Activated CD4-positive, alpha-beta T cell treated with anti-CD3 and anti-CD28 coated beads for 36 hours (primary cell): ENCODE measurements at regions of chr20 and their contacts with region 1.

Region 1: DNA sequence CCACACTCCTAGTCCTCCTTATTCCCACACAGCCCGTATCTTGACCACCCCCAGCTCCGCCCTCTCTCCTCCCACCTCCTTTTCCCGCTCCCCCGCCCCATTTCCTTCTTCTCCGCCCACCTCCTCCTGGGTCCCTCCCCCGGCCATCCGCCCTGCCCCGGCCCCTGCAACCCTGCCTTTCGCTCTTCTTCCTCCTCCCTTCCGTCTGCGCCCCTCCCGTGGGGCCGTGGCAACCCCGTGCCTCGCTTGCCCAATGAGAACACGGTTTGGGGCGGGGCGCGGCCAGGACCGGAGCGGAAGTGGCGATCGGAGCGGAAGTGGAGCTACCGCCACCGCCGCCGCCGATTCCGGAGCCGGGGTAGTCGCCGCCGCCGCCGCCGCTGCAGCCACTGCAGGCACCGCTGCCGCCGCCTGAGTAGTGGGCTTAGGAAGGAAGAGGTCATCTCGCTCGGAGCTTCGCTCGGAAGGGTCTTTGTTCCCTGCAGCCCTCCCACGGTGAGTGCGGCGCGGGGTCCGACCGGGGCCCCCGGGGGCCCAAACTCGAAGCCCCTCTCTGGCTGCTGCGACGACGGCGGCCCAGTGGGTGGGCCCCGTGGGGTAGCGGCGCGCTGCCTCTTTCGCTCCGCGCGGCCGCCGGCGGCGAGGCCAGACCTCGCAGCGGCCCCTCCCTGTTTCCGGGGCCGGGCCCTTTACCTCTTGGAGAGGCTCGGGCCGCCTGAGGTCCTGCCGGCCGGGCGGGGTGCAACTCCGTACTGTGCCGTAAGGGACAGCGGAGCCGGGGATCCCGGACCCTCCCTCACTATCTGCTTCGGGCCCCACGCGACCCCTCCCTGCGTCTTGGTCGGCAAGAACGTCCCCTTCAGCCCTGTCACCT is at the start of gene YWHAB:
- DNase-seq: peak; percentile 99
- ATAC-seq: peak; percentile 96
- H3K4me3 Mint-ChIP-seq: peak within 1 kb of the TSS; percentile 94
- H3K27ac Mint-ChIP-seq: peak within 1 kb of the TSS; percentile 95
- H3K4me1 Mint-ChIP-seq: peaks cover 58% of the 10 kb centered on the region
- H3K27me3 Mint-ChIP-seq: no peaks in the 10 kb centered on the region
- total RNA-seq, gene YWHAB: 273 to 326 TPM

Region 2: GRCh38 chr20:44521484-44522481 is 363.8 kb before region 1 on chr20 and contains the start of gene SERINC3:
- CTCF ChIA-PET with region 1: no interaction called
- POLR2A ChIA-PET with region 1: no interaction called
- intact Hi-C with region 1: loop called in 1 of 2 experiments (anchors 1 kb)
- DNase-seq: peak; percentile 98
- ATAC-seq: peak; percentile 99
- H3K4me3 Mint-ChIP-seq: peak within 1 kb of the TSS; percentile 81
- H3K27ac Mint-ChIP-seq: peak within 1 kb of the TSS; percentile 93
- H3K4me1 Mint-ChIP-seq: peaks cover 55% of the 10 kb centered on the region
- H3K27me3 Mint-ChIP-seq: no peaks in the 10 kb centered on the region
- total RNA-seq, gene SERINC3: 51.9 to 58.5 TPM

Region 3: DNA sequence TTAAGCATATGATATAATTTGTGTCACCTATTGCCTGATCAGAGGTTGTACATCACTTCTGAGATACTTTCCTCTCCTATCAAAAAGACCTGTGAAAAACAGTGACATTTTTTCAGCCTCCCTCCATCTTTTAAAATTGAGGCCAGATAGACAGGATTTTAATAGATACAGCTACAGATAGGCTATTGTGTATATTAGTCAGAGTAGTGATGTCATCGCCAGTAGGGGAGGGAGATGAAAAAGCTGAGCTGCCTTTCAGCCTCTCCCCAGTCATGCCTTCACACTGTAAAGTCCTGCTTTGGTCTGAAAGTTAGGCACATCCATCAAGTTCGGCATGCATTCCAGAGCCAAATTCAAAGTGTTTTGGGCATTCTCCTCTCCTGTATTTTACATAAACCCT is 16.3 kb after region 1 on chr20:
- CTCF ChIA-PET with region 1: interaction called, 71 read pairs
- POLR2A ChIA-PET with region 1: interaction called, 3 read pairs
- intact Hi-C with region 1: no loop called
- DNase-seq: no peak
- ATAC-seq: peak; percentile 48
- H3K4me3 Mint-ChIP-seq: no peak overlapping the region
- H3K27ac Mint-ChIP-seq: peak overlapping the region; percentile 51
- H3K4me1 Mint-ChIP-seq: peaks cover 44% of the 10 kb centered on the region
- H3K27me3 Mint-ChIP-seq: no peaks in the 10 kb centered on the region

Region 4: DNA sequence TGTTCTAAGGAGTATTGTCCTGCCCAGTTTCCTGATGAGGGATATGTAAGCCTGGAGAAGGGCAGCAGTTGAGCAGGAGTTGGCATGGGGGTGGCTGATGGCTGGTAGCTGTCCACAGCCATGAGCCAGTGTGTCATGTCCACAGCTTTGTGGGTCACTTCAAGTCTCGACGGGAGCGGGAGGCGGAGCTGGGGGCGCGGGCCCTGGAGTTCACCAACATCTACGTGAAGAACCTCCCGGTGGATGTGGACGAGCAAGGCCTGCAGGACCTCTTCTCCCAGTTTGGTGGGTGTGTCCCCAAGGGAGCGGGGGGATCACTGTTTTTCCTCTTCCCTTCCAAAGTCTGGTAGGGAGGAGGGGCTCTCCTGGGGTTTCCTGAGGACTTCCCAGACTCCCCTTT is 33.1 kb after region 1 on chr20:
- CTCF ChIA-PET with region 1: no interaction called
- POLR2A ChIA-PET with region 1: no interaction called
- intact Hi-C with region 1: no loop called
- DNase-seq: no peak
- ATAC-seq: no peak
- H3K4me3 Mint-ChIP-seq: no peak overlapping the region
- H3K27ac Mint-ChIP-seq: no peak overlapping the region
- H3K4me1 Mint-ChIP-seq: peaks cover 12% of the 10 kb centered on the region
- H3K27me3 Mint-ChIP-seq: no peaks in the 10 kb centered on the region

Region 5: GRCh38 chr20:44960103-44960852 is 74.6 kb after region 1 on chr20 and contains the start of gene TOMM34:
- CTCF ChIA-PET with region 1: interaction called, 3 read pairs
- POLR2A ChIA-PET with region 1: interaction called, 12 read pairs
- intact Hi-C with region 1: loop called (anchors 1 to 2 kb)
- DNase-seq: peak; percentile 98
- ATAC-seq: peak; percentile 91
- H3K4me3 Mint-ChIP-seq: peak within 1 kb of the TSS; percentile 94
- H3K27ac Mint-ChIP-seq: peak within 1 kb of the TSS; percentile 99
- H3K4me1 Mint-ChIP-seq: peaks cover 61% of the 10 kb centered on the region
- H3K27me3 Mint-ChIP-seq: no peaks in the 10 kb centered on the region
- total RNA-seq, gene TOMM34: 56.5 to 61.2 TPM

Region 6: GRCh38 chr20:45792332-45792686 is 906.7 kb after region 1 on chr20:
- CTCF ChIA-PET with region 1: no interaction called
- POLR2A ChIA-PET with region 1: no interaction called
- intact Hi-C with region 1: loop called in 1 of 2 experiments (anchors 5 kb)
- DNase-seq: peak; percentile 12
- ATAC-seq: peak; percentile 2
- H3K4me3 Mint-ChIP-seq: peak overlapping the region; percentile 81
- H3K27ac Mint-ChIP-seq: peak overlapping the region; percentile 80
- H3K4me1 Mint-ChIP-seq: peaks cover 13% of the 10 kb centered on the region
- H3K27me3 Mint-ChIP-seq: no peaks in the 10 kb centered on the region